HepG2 (cell line): ENCODE measurements at regions of chr20 and their contacts with region 1.

Region 1: GRCh38 chr20:62010551-62011402 is 54.9 kb downstream of the TAF4 start:
- DNase-seq: peak; percentile 64
- ATAC-seq: peak; percentile 84
- H3K4me3 ChIP-seq: no peak overlapping the region
- H3K27ac ChIP-seq: no peak overlapping the region
- H3K4me1 ChIP-seq: no peaks in the 10 kb centered on the region
- H3K27me3 ChIP-seq: no peaks in the 10 kb centered on the region
- CTCF ChIP-seq: peak; percentile 93
- EP300 ChIP-seq: no peak
- POLR2A ChIP-seq: no peak
- RAD21 ChIP-seq: peak; percentile 97

Region 2: GRCh38 chr20:61835301-61835700 is 175.5 kb before region 1 on chr20:
- CTCF ChIA-PET with region 1: no interaction called
- POLR2A ChIA-PET with region 1: no interaction called
- in situ Hi-C with region 1: no loop called
- intact Hi-C with region 1: no loop called
- DNase-seq: no peak
- ATAC-seq: no peak
- H3K4me3 ChIP-seq: no peak overlapping the region
- H3K27ac ChIP-seq: no peak overlapping the region
- H3K4me1 ChIP-seq: no peaks in the 10 kb centered on the region
- H3K27me3 ChIP-seq: peaks cover 33 to 91% of the 10 kb centered on the region in 2 experiments
- CTCF ChIP-seq: no peak
- EP300 ChIP-seq: no peak
- POLR2A ChIP-seq: no peak
- RAD21 ChIP-seq: no peak

Region 3: GRCh38 chr20:61965606-61966491 is 44.9 kb before region 1 on chr20:
- CTCF ChIA-PET with region 1: no interaction called
- POLR2A ChIA-PET with region 1: no interaction called
- in situ Hi-C with region 1: no loop called
- intact Hi-C with region 1: no loop called
- DNase-seq: peak; percentile 55
- ATAC-seq: peak; percentile 46
- H3K4me3 ChIP-seq: peak overlapping the region in 1 of 3 experiments; percentile 57; a peak in 1 of 6 replicates
- H3K27ac ChIP-seq: no peak overlapping the region
- H3K4me1 ChIP-seq: peaks cover 31% of the 10 kb centered on the region
- H3K27me3 ChIP-seq: no peaks in the 10 kb centered on the region; a peak in 1 of 5 replicates
- CTCF ChIP-seq: peak; percentile 56
- EP300 ChIP-seq: no peak
- POLR2A ChIP-seq: no peak
- RAD21 ChIP-seq: no peak

Region 4: DNA sequence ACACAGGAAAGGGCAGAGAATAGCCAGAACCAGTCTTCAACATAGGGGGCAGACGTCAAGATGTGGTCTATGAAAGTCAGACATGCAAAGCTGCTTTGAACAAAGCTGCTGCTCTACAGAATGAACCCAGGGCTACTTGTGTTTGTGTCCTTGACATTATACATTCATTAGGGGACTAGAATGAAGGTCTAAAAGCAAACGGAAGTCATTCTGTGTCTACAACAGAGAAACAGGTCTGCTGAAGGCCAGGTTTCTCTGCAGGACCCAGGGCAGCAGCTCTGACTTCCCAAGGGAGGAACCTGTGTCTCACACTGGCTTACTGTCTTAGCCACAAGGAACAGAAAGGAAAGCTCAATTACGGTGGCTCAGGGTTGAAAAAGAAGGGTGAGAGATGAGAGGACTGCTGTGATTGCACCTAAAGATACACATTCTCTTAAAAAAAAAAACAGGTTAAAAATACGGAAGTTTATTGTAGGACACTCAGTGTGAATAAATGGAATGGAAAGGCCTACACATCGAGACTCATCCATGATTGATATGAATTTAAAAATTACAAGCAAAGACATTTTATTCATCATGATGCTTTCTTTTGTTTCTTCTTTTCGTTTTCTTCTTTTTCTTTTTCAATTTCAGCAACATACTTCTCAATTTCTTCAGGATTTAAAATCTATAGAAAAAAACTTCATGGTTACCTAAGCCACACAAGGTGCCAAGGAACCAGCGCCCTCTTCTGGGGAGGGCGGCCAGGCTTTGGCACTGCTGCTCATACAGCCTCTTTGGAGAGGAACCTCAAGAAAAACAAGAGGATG is 125.7 kb after region 1 on chr20:
- CTCF ChIA-PET with region 1: interaction called, 48 read pairs
- POLR2A ChIA-PET with region 1: interaction called, 15 read pairs
- in situ Hi-C with region 1: loop called (anchors 5 kb)
- intact Hi-C with region 1: loop called (anchors 1 kb)
- DNase-seq: peak; percentile 74
- ATAC-seq: peak; percentile 39
- H3K4me3 ChIP-seq: no peak overlapping the region
- H3K27ac ChIP-seq: peak overlapping the region; percentile 13
- H3K4me1 ChIP-seq: peaks cover 45% of the 10 kb centered on the region
- H3K27me3 ChIP-seq: no peaks in the 10 kb centered on the region
- CTCF ChIP-seq: peak; percentile 88
- EP300 ChIP-seq: no peak
- POLR2A ChIP-seq: peak; percentile 11 to 30; a peak in 1 of 4 replicates
- RAD21 ChIP-seq: peak; percentile 84

Region 5: GRCh38 chr20:62143118-62143973 is 132.6 kb after region 1 on chr20 and contains the starts of genes PSMA7 and SS18L1:
- CTCF ChIA-PET with region 1: interaction called, 13 read pairs
- POLR2A ChIA-PET with region 1: interaction called, 15 read pairs
- in situ Hi-C with region 1: loop called (anchors 5 kb)
- intact Hi-C with region 1: no loop called
- DNase-seq: peak; percentile 84
- ATAC-seq: peak; percentile 71
- H3K4me3 ChIP-seq: peak within 1 kb of the TSS; percentile 87 to 93 (median 88)
- H3K27ac ChIP-seq: peak within 1 kb of the TSS; percentile 72
- H3K4me1 ChIP-seq: peaks cover 59% of the 10 kb centered on the region
- H3K27me3 ChIP-seq: no peaks in the 10 kb centered on the region; a peak in 1 of 5 replicates
- CTCF ChIP-seq: peak; percentile 22; the same call in 1 of the 2 replicates
- EP300 ChIP-seq: no peak
- POLR2A ChIP-seq: peak; percentile 74 to 93
- RAD21 ChIP-seq: peak; percentile 72
- total RNA-seq, gene PSMA7: 531 and 639 TPM in 2 replicates
- total RNA-seq, gene SS18L1: 15.3 and 17.8 TPM in 2 replicates

Region 6: GRCh38 chr20:62156592-62157386 is 146.0 kb after region 1 on chr20:
- CTCF ChIA-PET with region 1: interaction called, 46 read pairs
- POLR2A ChIA-PET with region 1: interaction called, 4 read pairs
- in situ Hi-C with region 1: no loop called
- intact Hi-C with region 1: loop called (anchors 1 kb)
- DNase-seq: peak; percentile 78
- ATAC-seq: peak; percentile 90
- H3K4me3 ChIP-seq: peak overlapping the region in 1 of 3 experiments; percentile 44; a peak in 1 of 6 replicates
- H3K27ac ChIP-seq: peak overlapping the region; percentile 56
- H3K4me1 ChIP-seq: peaks cover 37% of the 10 kb centered on the region
- H3K27me3 ChIP-seq: no peaks in the 10 kb centered on the region
- CTCF ChIP-seq: peak; percentile 90
- EP300 ChIP-seq: peak in 1 of 2 experiments; percentile 3; a peak in 1 of 4 replicates
- POLR2A ChIP-seq: no peak
- RAD21 ChIP-seq: peak; percentile 94